ENCODE measurements at regions of chr4 and their contacts with region 1.

Region 1: DNA sequence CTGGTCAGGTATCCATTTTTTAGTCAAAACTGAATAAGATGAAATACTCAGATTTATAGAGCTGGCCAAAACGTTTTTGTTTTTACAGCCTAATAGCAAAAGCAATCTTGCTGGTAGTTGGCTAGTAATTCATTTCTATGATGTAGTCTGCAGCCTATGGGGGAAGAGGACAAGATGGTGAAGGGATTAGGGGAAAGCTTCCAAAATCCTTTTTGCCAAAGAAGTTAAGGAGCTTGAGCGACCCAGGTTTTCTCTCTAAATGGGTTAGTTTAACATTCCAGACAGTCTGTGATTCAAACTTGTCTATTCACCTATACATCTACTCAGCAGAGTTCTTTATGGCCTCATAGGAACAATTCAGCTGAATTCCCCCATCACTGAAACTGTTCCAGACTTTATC is 89.8 kb upstream of the SPRY1 start:
- DNase-seq: no peak
- ATAC-seq: no peak
- H3K4me3 ChIP-seq: no peak overlapping the region
- H3K4me3 Mint-ChIP-seq: no peak overlapping the region
- H3K27ac ChIP-seq: no peak overlapping the region
- H3K27ac Mint-ChIP-seq: no peak overlapping the region
- H3K4me1 ChIP-seq: no peaks in the 10 kb centered on the region
- H3K4me1 Mint-ChIP-seq: peaks cover 0 to 8% (median 7%) of the 10 kb centered on the region in 3 donors
- H3K27me3 ChIP-seq: no peaks in the 10 kb centered on the region
- H3K27me3 Mint-ChIP-seq: no peaks in the 10 kb centered on the region

Region 2: GRCh38 chr4:122602277-122603142 is 704.3 kb before region 1 on chr4:
- CTCF ChIA-PET with region 1: no interaction called
- POLR2A ChIA-PET with region 1: interaction called in 1 of 2 experiments, 10 read pairs
- DNase-seq: peak in 1 of 35 experiments; percentile 56
- ATAC-seq: peak in 3 of 4 experiments; percentile 35 to 68 (median 41)
- H3K4me3 ChIP-seq: no peak overlapping the region
- H3K4me3 Mint-ChIP-seq: peak overlapping the region in 1 of 3 donors; percentile 0
- H3K27ac ChIP-seq: no peak overlapping the region
- H3K27ac Mint-ChIP-seq: no peak overlapping the region
- H3K4me1 ChIP-seq: peaks cover 0 to 3% of the 10 kb centered on the region in 2 experiments
- H3K4me1 Mint-ChIP-seq: peaks cover 0 to 6% (median 4%) of the 10 kb centered on the region in 3 donors
- H3K27me3 ChIP-seq: peaks cover 0 to 2% of the 10 kb centered on the region in 2 experiments
- H3K27me3 Mint-ChIP-seq: peaks cover 7 to 16% of the 10 kb centered on the region in 2 donors

Region 3: GRCh38 chr4:123055943-123056342 is 250.8 kb before region 1 on chr4:
- CTCF ChIA-PET with region 1: no interaction called
- POLR2A ChIA-PET with region 1: no interaction called
- DNase-seq: no peak
- ATAC-seq: no peak
- H3K4me3 ChIP-seq: no peak overlapping the region
- H3K4me3 Mint-ChIP-seq: no peak overlapping the region
- H3K27ac ChIP-seq: no peak overlapping the region
- H3K27ac Mint-ChIP-seq: no peak overlapping the region
- H3K4me1 ChIP-seq: no peaks in the 10 kb centered on the region
- H3K4me1 Mint-ChIP-seq: no peaks in the 10 kb centered on the region
- H3K27me3 ChIP-seq: no peaks in the 10 kb centered on the region
- H3K27me3 Mint-ChIP-seq: no peaks in the 10 kb centered on the region

Region 4: GRCh38 chr4:123083646-123084045 is 223.1 kb before region 1 on chr4:
- CTCF ChIA-PET with region 1: no interaction called
- POLR2A ChIA-PET with region 1: no interaction called
- DNase-seq: no peak
- ATAC-seq: no peak
- H3K4me3 ChIP-seq: no peak overlapping the region
- H3K4me3 Mint-ChIP-seq: no peak overlapping the region
- H3K27ac ChIP-seq: no peak overlapping the region
- H3K27ac Mint-ChIP-seq: no peak overlapping the region
- H3K4me1 ChIP-seq: no peaks in the 10 kb centered on the region
- H3K4me1 Mint-ChIP-seq: peaks cover 0 to 2% (median 1%) of the 10 kb centered on the region in 3 donors
- H3K27me3 ChIP-seq: no peaks in the 10 kb centered on the region
- H3K27me3 Mint-ChIP-seq: no peaks in the 10 kb centered on the region

Region 5: DNA sequence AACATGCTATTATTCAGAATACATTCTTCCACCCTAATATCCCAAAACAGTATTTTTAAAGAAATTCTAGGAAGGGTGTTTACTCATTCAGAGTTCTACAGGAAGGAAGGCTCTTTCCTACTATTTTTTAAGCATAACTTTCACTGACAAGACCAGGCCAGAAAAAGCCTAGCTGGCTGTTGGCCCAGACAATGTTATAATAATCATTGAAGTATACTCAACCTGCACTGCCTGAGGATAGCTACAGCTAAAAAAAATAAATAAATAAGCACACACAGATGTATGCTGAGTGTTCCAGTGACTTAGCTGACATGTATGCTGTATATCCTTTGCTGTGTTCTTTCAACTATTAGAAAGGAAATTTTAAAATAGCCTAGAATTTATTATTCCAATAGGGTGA is 55.9 kb before region 1 on chr4:
- CTCF ChIA-PET with region 1: no interaction called
- POLR2A ChIA-PET with region 1: no interaction called
- DNase-seq: no peak
- ATAC-seq: no peak
- H3K4me3 ChIP-seq: no peak overlapping the region
- H3K4me3 Mint-ChIP-seq: no peak overlapping the region
- H3K27ac ChIP-seq: no peak overlapping the region
- H3K27ac Mint-ChIP-seq: no peak overlapping the region
- H3K4me1 ChIP-seq: no peaks in the 10 kb centered on the region
- H3K4me1 Mint-ChIP-seq: peaks cover 0 to 2% (median 0%) of the 10 kb centered on the region in 3 donors
- H3K27me3 ChIP-seq: no peaks in the 10 kb centered on the region
- H3K27me3 Mint-ChIP-seq: no peaks in the 10 kb centered on the region

Measured in T-cell (primary cell).